ENCODE measurements at regions of chr11 and their contacts with region 1.

Region 1: DNA sequence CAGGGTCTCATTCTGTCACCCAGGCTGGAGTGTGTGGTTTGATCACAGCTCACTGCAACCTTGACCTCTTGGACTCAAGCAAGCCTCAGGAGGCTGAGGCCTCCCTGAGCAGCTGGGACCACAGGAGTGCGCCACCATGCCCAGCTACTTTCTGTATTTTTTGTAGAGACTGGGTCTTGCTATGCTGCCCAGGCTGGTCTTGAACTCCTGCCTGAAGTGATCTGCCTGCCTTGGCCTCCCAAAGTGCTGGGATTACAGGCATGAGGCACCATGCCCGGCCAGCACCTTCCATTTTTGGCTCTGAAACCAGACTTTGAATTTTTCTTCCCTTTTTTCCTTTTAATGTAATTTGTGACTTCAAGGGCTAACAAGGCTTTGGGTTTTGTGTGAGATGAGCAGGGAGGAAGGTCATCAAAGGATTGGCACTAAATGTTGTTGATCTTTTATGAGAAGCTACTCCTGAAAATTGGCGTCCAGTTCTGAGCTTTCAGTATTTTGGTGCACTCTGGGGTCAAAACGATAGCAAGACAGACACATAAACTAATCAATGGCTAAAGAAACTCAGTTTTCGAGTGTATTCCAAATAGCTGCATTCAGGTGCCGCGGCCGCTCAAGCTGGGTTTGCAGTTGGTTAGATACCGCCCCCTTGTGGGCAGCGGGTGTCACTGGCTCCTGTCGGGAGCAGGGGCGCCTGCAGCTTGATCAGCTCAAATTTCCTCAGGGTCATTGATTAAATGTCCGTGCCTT is 51.9 kb upstream of the CLMP start:
- DNase-seq: peak; percentile 77 to 94 (median 89)
- H3K4me3 ChIP-seq: no peak overlapping the region
- H3K27ac ChIP-seq: no peak overlapping the region
- H3K4me1 ChIP-seq: peaks cover 0 to 7% of the 10 kb centered on the region in 2 donors
- H3K27me3 ChIP-seq: no peaks in the 10 kb centered on the region
- CTCF ChIP-seq: peak; percentile 94 to 99 (median 96)
- POLR2A ChIP-seq: no peak

Region 2: DNA sequence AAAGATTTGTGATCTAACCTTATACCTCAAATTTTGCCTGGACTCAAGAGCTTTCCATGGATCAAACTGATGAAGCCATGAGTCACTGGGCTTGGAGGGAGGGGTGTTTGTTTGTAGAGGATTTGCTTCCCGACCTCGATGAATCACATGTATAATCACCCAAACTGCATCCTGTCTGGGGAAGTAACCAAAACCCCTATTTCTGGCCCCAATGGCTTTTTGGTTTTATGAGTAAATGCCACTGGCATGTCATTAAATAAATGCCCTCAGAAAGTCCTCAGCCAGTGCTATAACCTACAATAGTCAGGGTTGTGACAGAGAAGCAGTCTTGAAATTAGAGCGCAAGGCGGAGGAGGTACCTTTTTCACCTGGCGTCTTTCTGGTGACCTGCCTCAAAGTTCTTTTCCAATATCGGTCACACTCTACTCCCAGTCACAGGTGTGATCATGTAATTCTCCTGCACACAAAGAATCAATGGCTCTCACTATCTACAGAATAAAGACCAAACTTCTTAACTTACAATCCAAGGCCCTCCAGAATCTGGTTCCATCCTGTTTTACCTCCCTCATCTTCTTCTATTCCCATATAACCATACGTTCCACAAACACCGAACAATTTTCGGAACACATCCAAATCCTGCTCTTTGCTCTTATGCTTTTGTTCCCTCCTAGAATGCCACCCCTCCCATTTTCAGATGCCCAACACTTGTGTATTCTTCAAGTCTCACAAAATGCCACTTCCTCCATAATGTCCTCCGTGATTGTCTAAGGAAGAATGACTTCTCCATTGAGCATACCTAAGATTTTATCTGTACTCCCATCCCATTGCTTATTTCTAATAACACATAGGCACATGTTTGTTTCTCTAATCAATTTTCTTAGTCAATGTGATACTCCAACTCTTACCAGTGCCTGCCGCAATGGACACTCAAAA is 1049.6 kb before region 1 on chr11:
- intact Hi-C with region 1: no loop called
- DNase-seq: peak; percentile 27 to 78 (median 67)
- H3K4me3 ChIP-seq: no peak overlapping the region
- H3K27ac ChIP-seq: peak overlapping the region in 1 of 5 donors; percentile 2
- H3K4me1 ChIP-seq: peaks cover 0 to 5% of the 10 kb centered on the region in 2 donors
- H3K27me3 ChIP-seq: no peaks in the 10 kb centered on the region
- CTCF ChIP-seq: no peak
- POLR2A ChIP-seq: no peak

Region 3: GRCh38 chr11:122671400-122671891 is 575.5 kb before region 1 on chr11:
- intact Hi-C with region 1: no loop called
- DNase-seq: no peak
- H3K4me3 ChIP-seq: no peak overlapping the region
- H3K27ac ChIP-seq: no peak overlapping the region
- H3K4me1 ChIP-seq: peaks cover 0 to 4% of the 10 kb centered on the region in 2 donors
- H3K27me3 ChIP-seq: no peaks in the 10 kb centered on the region
- CTCF ChIP-seq: no peak
- POLR2A ChIP-seq: no peak

Region 4: GRCh38 chr11:123103326-123103980 is 143.5 kb before region 1 on chr11:
- intact Hi-C with region 1: loop called (anchors 2 to 5 kb)
- DNase-seq: peak; percentile 42 to 85 (median 61)
- H3K4me3 ChIP-seq: no peak overlapping the region
- H3K27ac ChIP-seq: no peak overlapping the region
- H3K4me1 ChIP-seq: peaks cover 14 to 21% of the 10 kb centered on the region in 2 donors
- H3K27me3 ChIP-seq: no peaks in the 10 kb centered on the region
- CTCF ChIP-seq: peak; percentile 60 to 82 (median 72)
- POLR2A ChIP-seq: no peak

Region 5: DNA sequence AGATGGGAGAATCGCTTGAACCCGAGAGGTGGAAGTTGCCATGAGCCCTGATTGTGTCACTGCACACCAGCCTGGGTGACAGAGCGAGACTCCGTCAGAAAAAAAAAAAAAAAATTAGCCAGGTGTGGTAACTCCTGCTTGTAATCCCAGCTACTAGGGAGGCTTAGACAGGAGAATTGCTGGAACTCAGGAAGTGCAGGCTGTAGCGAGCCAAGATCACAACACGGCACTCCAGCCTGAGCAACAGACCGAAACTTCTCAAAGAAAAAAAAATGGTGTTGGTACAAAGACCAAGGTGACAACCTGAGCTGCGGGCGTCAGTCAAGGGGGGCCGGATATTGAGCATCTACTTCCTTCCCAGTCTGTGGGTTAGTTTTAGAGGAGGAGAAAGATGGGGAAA is 136.6 kb before region 1 on chr11:
- intact Hi-C with region 1: loop called (anchors 2 to 5 kb)
- DNase-seq: no peak
- H3K4me3 ChIP-seq: no peak overlapping the region
- H3K27ac ChIP-seq: no peak overlapping the region
- H3K4me1 ChIP-seq: no peaks in the 10 kb centered on the region
- H3K27me3 ChIP-seq: no peaks in the 10 kb centered on the region
- CTCF ChIP-seq: no peak
- POLR2A ChIP-seq: no peak

Region 6: GRCh38 chr11:123129920-123130319 is 117.0 kb before region 1 on chr11:
- intact Hi-C with region 1: no loop called
- DNase-seq: no peak
- H3K4me3 ChIP-seq: no peak overlapping the region
- H3K27ac ChIP-seq: peak overlapping the region in 1 of 5 donors; percentile 48
- H3K4me1 ChIP-seq: no peaks in the 10 kb centered on the region
- H3K27me3 ChIP-seq: no peaks in the 10 kb centered on the region
- CTCF ChIP-seq: no peak
- POLR2A ChIP-seq: no peak

Region 7: GRCh38 chr11:123166071-123166559 is 80.8 kb before region 1 on chr11:
- intact Hi-C with region 1: loop called in 1 of 2 experiments (anchors 10 kb)
- DNase-seq: peak in 5 of 7 donors; percentile 23 to 66 (median 48)
- H3K4me3 ChIP-seq: no peak overlapping the region
- H3K27ac ChIP-seq: peak overlapping the region in 1 of 5 donors; percentile 40
- H3K4me1 ChIP-seq: no peaks in the 10 kb centered on the region
- H3K27me3 ChIP-seq: no peaks in the 10 kb centered on the region
- CTCF ChIP-seq: peak in 5 of 6 experiments; percentile 13 to 48 (median 43)
- POLR2A ChIP-seq: no peak

Measured in adrenal gland (tissue), 19 donors.